ENCODE measurements at regions of chr17 and their contacts with region 1.

Region 1: DNA sequence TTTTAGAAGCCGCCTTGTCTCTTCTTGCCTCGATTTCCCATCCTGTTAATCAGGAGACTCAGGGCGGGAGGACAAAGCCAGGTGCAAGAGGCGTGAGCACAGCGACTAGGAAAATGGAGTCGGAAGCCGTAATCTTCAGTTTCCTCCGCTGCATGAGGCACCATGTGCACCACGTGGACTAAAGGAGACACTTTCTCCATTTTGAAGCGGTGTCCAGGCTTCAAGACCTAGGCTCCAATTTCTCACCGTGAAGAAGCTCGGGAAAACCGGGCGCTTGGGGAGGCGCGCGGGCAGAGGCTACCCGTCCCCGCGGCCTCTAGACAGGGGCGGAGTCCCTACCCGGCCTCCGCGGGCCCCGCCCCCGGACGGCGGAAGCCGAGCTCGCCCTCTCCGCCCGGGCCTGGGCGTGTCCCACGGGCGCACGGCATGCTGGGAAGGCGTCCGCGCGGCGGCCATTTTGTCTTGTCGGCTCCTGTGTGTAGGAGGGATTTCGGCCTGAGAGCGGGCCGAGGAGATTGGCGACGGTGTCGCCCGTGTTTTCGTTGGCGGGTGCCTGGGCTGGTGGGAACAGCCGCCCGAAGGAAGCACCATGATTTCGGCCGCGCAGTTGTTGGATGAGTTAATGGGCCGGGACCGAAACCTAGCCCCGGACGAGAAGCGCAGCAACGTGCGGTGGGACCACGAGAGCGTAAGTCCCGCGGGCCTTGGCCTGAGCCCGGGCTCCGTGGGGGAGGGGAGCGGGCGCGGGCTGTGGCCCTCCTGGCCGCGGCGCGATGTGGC is at the start of gene LUC7L3:
- DNase-seq: peak; percentile 95
- ATAC-seq: peak; percentile 94
- H3K4me3 Mint-ChIP-seq: peak within 1 kb of the TSS; percentile 99
- H3K27ac Mint-ChIP-seq: peak within 1 kb of the TSS; percentile 99
- H3K4me1 Mint-ChIP-seq: peaks cover 25% of the 10 kb centered on the region
- H3K27me3 Mint-ChIP-seq: no peaks in the 10 kb centered on the region
- total RNA-seq, gene LUC7L3: 112 to 116 TPM

Region 2: DNA sequence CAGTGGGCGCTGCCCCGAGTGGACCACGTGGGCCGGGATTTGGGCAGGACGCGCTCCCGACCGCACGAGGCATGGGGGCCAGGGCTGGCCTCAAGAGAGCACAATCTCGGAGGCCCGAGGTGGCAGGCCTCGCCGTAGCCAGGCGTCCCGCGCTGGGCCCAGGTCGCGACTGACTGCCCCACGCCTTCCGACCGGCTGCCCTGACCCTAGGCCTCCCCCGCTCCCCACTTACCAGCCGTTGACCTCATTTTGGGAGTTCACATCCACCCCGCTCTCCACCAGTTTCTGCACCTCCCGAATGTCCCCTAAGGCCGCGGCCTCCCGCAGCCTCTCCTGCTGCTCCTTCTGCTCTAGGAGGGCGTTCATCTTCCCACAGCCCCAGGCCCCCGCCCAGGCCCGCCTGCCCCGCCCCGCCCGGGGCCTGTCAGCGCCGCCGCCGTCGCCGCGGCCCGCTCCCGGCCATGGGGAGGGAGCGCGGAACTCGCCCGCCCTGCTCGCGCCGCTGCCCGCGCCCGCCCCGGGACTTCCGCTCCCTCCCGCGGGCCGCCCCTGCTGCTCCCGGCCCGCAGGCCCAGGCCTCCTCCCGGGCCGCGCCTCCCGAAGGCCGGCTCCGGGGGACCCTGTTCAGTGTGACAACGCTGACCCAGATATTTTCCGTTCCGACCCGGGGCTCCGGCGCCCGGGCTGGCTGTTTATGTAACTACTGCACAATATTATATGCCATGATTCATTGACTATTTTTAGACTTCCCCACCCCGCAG is 11.9 kb before region 1 on chr17 and contains the start of gene ANKRD40:
- CTCF ChIA-PET with region 1: interaction called, 6 read pairs
- POLR2A ChIA-PET with region 1: interaction called, 31 read pairs
- DNase-seq: peak; percentile 92
- ATAC-seq: peak; percentile 88
- H3K4me3 Mint-ChIP-seq: peak within 1 kb of the TSS; percentile 95
- H3K27ac Mint-ChIP-seq: peak within 1 kb of the TSS; percentile 96
- H3K4me1 Mint-ChIP-seq: peaks cover 53% of the 10 kb centered on the region
- H3K27me3 Mint-ChIP-seq: peaks cover 2% of the 10 kb centered on the region
- total RNA-seq, gene ANKRD40: 28.9 to 31.2 TPM